ENCODE measurements at regions of chr12 and their contacts with region 1.

Region 1: DNA sequence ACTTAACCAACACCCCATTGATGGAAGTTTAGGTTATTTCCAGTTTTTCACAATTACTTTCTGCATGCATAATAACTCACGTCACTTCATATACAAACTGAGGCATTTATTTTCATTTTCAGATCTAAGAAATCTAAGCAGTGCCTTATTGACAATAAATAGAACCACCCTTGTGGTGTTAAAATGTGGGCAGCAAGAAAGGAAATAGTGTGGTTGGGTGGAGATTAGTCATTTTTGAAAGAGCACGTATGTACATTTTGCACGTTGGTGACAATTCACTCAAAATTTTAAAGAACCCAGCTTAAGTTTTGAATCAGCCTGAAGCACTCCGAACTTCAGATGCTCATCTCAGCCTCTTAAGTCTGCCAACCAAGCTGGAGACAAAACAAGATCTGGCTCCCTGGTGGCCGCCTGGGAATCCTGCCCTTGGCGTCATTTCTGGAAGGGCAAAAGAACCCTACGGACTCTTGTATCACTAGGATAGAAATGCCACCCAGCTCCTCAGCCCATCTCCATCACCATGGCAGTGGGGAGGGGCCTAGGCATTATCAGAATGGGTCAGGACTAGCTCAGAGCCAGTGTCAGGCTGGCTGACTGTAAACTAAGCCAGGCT is 89.5 kb upstream of the BCL2L14 start:
- DNase-seq: peak; percentile 78
- H3K4me3 Mint-ChIP-seq: peak overlapping the region; percentile 36
- H3K27ac Mint-ChIP-seq: peak overlapping the region; percentile 99
- H3K4me1 Mint-ChIP-seq: peaks cover 68% of the 10 kb centered on the region
- H3K27me3 Mint-ChIP-seq: no peaks in the 10 kb centered on the region

Region 2: DNA sequence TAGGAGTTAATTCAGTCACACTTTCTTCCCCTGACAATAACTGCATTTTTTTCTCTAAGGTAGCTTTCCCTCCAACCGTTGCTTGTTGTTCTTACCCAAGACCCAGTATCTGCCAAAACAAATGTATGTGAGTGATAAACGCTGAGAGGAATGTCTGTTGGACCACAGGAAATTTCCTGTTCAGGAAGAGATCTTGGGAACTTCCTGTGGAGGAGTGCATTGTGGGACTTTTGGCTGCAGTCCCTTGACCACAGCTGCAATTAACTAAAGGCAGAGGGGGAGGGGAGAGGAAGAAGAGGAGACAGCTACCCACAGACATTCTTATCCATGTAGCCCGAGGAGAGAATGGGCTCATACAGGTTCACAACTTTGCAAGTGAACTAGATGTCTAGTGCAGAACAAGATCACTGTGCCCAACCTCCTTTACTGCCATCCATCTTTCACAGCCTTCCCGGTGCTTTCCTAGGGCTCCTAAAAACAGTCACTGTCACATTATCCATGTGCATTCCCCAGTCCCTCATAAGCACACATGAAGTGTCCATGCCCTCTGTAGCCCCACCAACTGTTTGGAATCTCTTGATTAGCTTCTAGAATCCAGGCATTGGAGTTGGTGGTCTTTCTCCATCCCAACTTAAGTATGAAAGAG is 182.2 kb before region 1 on chr12:
- CTCF ChIA-PET with region 1: no interaction called
- POLR2A ChIA-PET with region 1: no interaction called
- intact Hi-C with region 1: no loop called
- DNase-seq: no peak
- H3K4me3 Mint-ChIP-seq: no peak overlapping the region
- H3K27ac Mint-ChIP-seq: no peak overlapping the region
- H3K4me1 Mint-ChIP-seq: peaks cover 54% of the 10 kb centered on the region
- H3K27me3 Mint-ChIP-seq: no peaks in the 10 kb centered on the region

Region 3: DNA sequence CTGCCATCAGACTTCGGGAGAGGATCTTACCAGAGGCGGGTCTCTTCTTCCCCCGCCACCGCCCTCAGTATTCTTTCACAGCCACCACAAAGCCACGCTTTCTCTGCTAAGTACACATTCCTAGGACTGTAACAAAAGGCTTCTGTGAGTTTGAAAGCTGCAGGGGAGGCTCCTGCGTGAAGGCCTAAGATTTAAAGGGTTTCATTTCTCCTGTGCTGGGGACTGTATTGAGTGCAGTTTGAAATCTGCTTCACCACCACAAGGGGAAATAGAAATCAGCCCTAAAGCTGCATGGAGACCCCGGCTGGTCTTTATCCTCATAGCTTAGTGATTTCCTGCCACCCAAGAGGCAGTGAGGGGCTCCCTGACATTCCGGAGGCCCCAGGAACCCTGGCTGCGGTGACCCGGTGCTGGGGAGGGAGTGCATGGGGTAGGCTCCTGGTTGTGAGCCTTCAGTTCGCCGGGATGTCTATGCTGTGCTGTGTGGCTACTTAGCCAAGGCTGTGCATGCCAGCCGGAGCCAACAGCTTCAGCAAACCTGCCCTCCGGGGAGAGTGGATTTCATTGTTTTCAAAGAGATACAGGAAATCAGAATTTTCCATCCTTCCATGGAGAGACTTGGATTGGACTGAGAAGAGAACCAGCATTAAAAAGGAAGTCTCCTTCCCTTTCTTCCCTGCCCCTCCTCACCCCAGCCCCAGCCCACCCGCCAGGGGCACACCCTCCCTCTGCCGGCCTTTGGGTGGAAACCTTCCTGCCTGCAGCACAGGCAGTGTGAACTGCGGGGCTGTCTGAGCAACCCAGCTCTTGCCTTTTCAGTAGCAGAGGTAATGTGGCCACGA is 168.4 kb before region 1 on chr12:
- CTCF ChIA-PET with region 1: no interaction called
- POLR2A ChIA-PET with region 1: interaction called, 6 read pairs
- intact Hi-C with region 1: loop called (anchors 1 kb)
- DNase-seq: peak; percentile 41
- H3K4me3 Mint-ChIP-seq: peak overlapping the region; percentile 63
- H3K27ac Mint-ChIP-seq: peak overlapping the region; percentile 78
- H3K4me1 Mint-ChIP-seq: peaks cover 80% of the 10 kb centered on the region
- H3K27me3 Mint-ChIP-seq: no peaks in the 10 kb centered on the region

Region 4: DNA sequence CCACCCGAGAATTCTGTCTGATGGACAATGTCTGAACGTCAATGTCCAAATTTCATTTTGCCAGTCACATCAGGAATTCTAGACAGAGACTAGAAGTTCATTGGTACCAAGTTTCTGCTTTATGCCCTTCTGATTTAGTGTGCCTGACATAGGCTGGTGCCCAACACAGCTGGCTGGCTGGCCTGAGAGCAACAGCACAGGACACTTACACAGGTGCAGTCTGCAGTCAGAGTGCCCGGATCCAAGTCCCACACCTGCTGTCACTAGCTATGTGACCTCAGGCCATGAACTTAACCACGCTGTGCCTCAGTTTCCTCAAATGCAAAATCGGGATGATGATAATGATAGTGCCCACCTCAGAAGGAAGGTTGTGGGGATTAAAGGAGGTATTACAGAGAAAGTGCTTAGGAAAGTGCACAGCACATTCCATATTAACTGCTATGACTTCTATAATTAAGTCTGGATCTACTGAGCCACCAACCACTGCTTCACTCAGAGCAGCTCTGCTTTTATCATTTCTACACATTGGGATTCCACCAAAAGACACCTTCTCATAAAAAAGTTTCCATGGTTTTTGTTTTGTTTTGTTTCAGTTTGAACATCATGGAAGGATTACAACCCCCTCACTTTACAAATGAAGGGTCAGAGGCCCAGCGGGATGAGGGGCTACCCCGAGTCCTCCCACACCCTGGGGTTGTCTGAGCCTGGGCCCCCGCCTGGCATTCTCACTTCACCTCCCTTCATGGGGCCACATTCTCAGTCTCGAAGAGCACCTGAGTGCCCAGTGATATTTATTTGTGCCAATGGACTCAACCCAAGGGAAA is 79.3 kb before region 1 on chr12:
- CTCF ChIA-PET with region 1: interaction called, 6 read pairs
- POLR2A ChIA-PET with region 1: interaction called, 12 read pairs
- intact Hi-C with region 1: loop called (anchors 1 kb)
- DNase-seq: peak; percentile 81
- H3K4me3 Mint-ChIP-seq: peak overlapping the region; percentile 50
- H3K27ac Mint-ChIP-seq: peak overlapping the region; percentile 92
- H3K4me1 Mint-ChIP-seq: peaks cover 52% of the 10 kb centered on the region
- H3K27me3 Mint-ChIP-seq: no peaks in the 10 kb centered on the region

Region 5: DNA sequence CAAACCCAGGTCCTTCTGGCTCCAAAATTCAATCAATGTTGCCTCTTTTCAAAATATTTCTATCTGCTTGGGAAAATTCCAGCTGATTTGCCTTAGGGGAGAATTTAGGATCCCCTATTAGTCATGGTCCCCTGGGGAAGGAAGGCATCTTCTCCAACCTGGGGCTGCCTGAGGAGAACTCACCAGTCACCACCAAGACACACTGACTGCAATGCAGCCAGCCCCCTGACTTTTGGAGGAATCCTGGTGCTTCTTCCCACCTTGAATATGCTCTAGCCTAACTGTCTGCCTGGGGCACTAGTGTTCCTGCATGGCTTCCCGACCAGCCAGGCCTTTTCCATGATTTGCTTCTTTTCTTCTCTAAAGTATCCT is 17.7 kb after region 1 on chr12:
- CTCF ChIA-PET with region 1: interaction called, 6 read pairs
- POLR2A ChIA-PET with region 1: interaction called, 3 read pairs
- intact Hi-C with region 1: loop called (anchors 2 kb)
- DNase-seq: no peak
- H3K4me3 Mint-ChIP-seq: no peak overlapping the region
- H3K27ac Mint-ChIP-seq: peak overlapping the region; percentile 82
- H3K4me1 Mint-ChIP-seq: peaks cover 33% of the 10 kb centered on the region
- H3K27me3 Mint-ChIP-seq: no peaks in the 10 kb centered on the region